ENCODE measurements at regions of chr3 and their contacts with region 1.

Region 1: DNA sequence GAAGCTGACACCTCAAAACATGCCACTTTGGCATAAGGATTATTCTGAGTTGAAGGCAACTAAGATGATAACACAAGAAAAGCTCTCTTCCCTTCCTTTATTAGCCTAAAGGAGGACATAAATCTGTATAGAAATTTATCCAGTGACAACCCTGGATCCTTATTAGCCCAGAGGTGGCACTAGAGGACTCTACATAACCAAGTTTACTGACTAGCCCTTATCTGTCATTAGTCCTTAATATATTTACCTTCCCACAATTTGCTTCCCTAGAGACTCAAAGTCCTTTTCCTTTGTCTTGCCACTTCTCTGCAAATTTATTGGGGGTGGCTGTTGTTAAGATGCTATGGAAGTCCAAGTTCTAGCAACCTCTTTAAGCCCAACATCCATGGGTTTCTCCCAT is 26.7 kb downstream of the CEP70 start:
- DNase-seq: no peak
- H3K4me3 Mint-ChIP-seq: no peak overlapping the region
- H3K27ac Mint-ChIP-seq: no peak overlapping the region
- H3K4me1 Mint-ChIP-seq: peaks cover 12% of the 10 kb centered on the region
- H3K27me3 Mint-ChIP-seq: no peaks in the 10 kb centered on the region

Region 2: DNA sequence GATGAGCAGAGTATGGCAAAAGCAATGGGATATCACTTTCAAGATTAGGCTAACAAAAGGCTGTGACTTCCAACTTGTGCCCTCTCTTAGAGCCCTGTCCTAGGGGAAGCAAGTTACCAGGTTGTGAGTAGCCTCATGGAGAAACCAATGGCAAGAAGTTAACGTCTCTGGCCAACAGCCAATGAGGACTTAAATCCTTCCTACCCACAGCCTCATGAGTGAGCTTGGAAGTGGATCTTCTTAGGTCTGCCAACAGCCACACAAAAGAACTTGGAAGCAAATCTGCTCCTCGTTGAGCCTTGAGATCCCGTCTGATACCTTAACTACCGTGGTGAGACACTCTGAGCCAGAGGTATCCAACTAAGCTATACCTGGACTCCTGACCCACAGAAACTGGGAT is 243.4 kb before region 1 on chr3:
- CTCF ChIA-PET with region 1: no interaction called
- intact Hi-C with region 1: no loop called
- DNase-seq: no peak
- H3K4me3 Mint-ChIP-seq: no peak overlapping the region
- H3K27ac Mint-ChIP-seq: no peak overlapping the region
- H3K4me1 Mint-ChIP-seq: peaks cover 54% of the 10 kb centered on the region
- H3K27me3 Mint-ChIP-seq: no peaks in the 10 kb centered on the region

Region 3: GRCh38 chr3:138578141-138578540 is 10.7 kb after region 1 on chr3:
- CTCF ChIA-PET with region 1: no interaction called
- intact Hi-C with region 1: loop called (anchors 1 kb)
- DNase-seq: no peak
- H3K4me3 Mint-ChIP-seq: no peak overlapping the region
- H3K27ac Mint-ChIP-seq: no peak overlapping the region
- H3K4me1 Mint-ChIP-seq: peaks cover 25% of the 10 kb centered on the region
- H3K27me3 Mint-ChIP-seq: no peaks in the 10 kb centered on the region